Left ventricle myocardium inferior (tissue), 1 donor: ENCODE measurements at regions of chr15 and their contacts with region 1.

Region 1: DNA sequence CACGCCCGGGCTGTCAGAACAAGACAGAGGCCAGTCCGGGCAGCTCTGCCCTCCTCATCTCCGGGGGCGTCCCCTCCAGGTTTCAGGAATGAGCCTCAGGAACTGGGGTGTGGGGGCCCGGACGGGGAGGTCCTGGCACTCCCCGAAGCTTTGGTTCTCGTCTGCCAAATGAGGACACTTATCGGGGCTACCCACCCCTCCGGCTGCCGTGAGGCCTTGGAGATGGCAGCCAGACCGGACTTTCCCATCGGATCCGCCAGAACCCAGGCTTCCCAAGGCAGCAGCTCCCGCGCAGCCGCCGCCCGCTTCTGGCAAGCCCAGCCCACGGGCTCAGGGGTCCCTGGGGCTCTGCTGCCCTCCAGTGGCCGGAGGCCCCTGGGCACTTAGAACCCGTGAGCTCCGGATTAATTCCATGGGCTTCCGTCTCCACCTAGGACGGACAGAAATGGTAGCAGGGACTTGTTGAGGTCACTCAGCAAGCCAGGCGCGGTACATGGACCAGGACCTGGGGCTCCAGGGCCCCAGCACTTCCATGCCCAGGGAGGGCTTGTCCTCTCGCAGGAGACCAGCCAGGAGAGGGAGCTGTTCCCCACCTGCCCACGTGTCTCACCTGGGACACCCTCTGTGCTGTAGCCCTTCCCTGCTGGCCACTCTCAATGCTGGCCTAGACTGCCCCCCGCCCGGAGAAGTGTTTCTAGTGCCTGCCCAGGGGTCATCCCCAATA is 89.4 kb downstream of the LINGO1 start:
- DNase-seq: peak; percentile 89
- H3K4me3 ChIP-seq: peak overlapping the region; percentile 59
- H3K27ac ChIP-seq: peak overlapping the region; percentile 81
- H3K4me1 ChIP-seq: peaks cover 61% of the 10 kb centered on the region
- H3K27me3 ChIP-seq: no peaks in the 10 kb centered on the region
- CTCF ChIP-seq: peak; percentile 98

Region 2: DNA sequence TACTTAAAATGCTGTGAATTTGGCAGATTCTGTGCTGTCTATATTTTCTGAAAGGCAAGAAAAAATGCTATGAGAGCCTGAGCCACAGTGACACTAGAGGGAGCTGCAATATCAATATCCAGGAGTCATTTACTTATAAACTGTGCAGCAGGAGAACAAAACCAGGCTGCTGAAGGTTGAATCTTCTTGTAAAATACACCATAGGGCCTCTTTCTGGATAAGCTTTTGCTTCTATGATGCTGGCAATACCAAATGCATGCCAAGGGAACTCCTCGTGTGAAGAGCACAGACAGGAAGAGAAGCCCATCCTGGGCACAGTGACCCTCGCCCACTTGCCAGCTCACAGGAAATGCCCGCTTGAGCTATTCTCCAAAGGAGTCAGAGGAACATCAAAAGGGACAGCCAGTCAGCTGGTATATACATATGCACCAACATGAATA is 424.4 kb before region 1 on chr15:
- intact Hi-C with region 1: loop called (anchors 10 kb)
- DNase-seq: no peak
- H3K4me3 ChIP-seq: no peak overlapping the region
- H3K27ac ChIP-seq: peak overlapping the region; percentile 6
- H3K4me1 ChIP-seq: peaks cover 29% of the 10 kb centered on the region
- H3K27me3 ChIP-seq: no peaks in the 10 kb centered on the region
- CTCF ChIP-seq: peak; percentile 87

Region 3: DNA sequence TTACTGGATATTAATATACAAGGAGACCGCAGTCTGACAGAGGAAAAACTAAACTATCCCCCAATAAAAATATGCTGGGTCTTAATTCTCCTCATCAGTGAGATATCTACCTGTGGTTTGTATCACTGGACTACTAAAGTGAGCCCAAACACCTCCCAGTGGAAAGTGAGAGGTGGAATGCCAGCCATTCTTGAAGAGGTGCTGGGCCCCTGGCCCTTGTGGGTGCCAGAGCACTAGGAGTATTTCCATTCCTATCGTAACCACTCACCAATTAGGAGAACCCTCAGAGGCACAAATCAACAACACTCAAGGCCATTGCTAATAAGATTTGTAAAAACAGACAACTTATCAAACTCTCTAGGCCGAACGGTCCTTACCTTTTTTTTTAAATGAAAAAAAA is 350.9 kb before region 1 on chr15:
- intact Hi-C with region 1: loop called (anchors 5 kb)
- DNase-seq: no peak
- H3K4me3 ChIP-seq: no peak overlapping the region
- H3K27ac ChIP-seq: peak overlapping the region; percentile 2
- H3K4me1 ChIP-seq: peaks cover 44% of the 10 kb centered on the region
- H3K27me3 ChIP-seq: no peaks in the 10 kb centered on the region
- CTCF ChIP-seq: no peak

Region 4: GRCh38 chr15:77659350-77660321 is 116.3 kb after region 1 on chr15:
- intact Hi-C with region 1: no loop called
- DNase-seq: peak; percentile 34
- H3K4me3 ChIP-seq: no peak overlapping the region
- H3K27ac ChIP-seq: no peak overlapping the region
- H3K4me1 ChIP-seq: no peaks in the 10 kb centered on the region
- H3K27me3 ChIP-seq: peaks cover 79% of the 10 kb centered on the region
- CTCF ChIP-seq: peak; percentile 65